A673 (cell line): ENCODE measurements at regions of chr10 and their contacts with region 1.

Region 1: GRCh38 chr10:73644015-73644743 is 2.9 kb upstream of the MYOZ1 start:
- DNase-seq: peak; percentile 81
- H3K4me3 ChIP-seq: no peak overlapping the region
- H3K27ac ChIP-seq: no peak overlapping the region
- H3K4me1 ChIP-seq: peaks cover 6% of the 10 kb centered on the region
- H3K27me3 ChIP-seq: no peaks in the 10 kb centered on the region
- CTCF ChIP-seq: peak; percentile 85

Region 2: GRCh38 chr10:72784551-72785351 is 859.4 kb before region 1 on chr10:
- CTCF ChIA-PET with region 1: no interaction called
- POLR2A ChIA-PET with region 1: no interaction called
- intact Hi-C with region 1: no loop called
- DNase-seq: peak; percentile 68
- H3K4me3 ChIP-seq: peak overlapping the region; percentile 26
- H3K27ac ChIP-seq: peak overlapping the region; percentile 44
- H3K4me1 ChIP-seq: peaks cover 34% of the 10 kb centered on the region
- H3K27me3 ChIP-seq: no peaks in the 10 kb centered on the region
- CTCF ChIP-seq: no peak

Region 3: GRCh38 chr10:73263948-73264347 is 380.2 kb before region 1 on chr10:
- CTCF ChIA-PET with region 1: no interaction called
- POLR2A ChIA-PET with region 1: no interaction called
- intact Hi-C with region 1: loop called (anchors 1 kb)
- DNase-seq: peak; percentile 42
- H3K4me3 ChIP-seq: no peak overlapping the region
- H3K27ac ChIP-seq: no peak overlapping the region
- H3K4me1 ChIP-seq: peaks cover 5% of the 10 kb centered on the region
- H3K27me3 ChIP-seq: no peaks in the 10 kb centered on the region
- CTCF ChIP-seq: peak; percentile 72

Region 4: DNA sequence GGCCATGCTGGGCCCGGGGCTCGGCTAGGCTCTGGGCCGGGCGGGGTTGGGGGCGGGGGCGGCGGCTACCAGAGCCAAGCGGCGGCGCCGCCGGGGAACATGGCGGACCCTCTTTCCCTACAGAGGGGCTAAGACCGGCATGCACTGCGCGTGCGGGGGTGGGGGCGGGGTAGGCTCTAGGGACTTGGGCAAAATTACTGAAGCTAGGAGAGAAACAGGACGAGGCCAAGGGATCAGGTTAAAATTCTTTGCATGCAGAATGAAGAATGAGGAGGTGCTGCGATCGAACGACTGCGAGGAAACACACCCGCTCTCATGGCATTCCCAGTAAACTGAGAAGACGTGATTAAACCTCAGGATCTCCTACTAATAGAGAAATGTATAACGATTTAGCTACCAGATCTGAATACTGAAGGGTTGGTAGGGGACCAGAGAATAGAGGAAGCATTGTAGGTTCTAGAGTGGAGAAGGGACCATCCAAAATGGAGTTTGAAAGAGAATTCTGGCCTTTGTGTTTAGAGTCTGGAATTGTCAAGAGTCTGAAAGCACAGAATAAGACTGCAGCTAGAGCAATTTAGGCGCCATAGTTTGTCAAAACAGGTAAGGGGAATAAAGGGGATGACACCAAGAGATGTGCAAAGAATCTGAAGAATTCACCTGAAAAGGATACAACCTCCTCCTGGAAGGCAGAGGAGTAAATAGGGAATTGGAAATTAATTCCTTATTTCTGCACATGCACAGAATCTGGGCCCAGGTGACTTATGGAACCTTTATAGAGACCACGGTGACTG is 148.1 kb before region 1 on chr10 and contains the start of gene PPP3CB:
- CTCF ChIA-PET with region 1: no interaction called
- POLR2A ChIA-PET with region 1: interaction called, 10 read pairs
- intact Hi-C with region 1: no loop called
- DNase-seq: peak; percentile 98
- H3K4me3 ChIP-seq: peak within 1 kb of the TSS; percentile 96
- H3K27ac ChIP-seq: peak within 1 kb of the TSS; percentile 90
- H3K4me1 ChIP-seq: peaks cover 16% of the 10 kb centered on the region
- H3K27me3 ChIP-seq: no peaks in the 10 kb centered on the region
- CTCF ChIP-seq: no peak
- total RNA-seq, gene PPP3CB: 57.8 and 60.2 TPM in 2 replicates

Region 5: GRCh38 chr10:73529089-73529832 is 114.9 kb before region 1 on chr10:
- CTCF ChIA-PET with region 1: interaction called, 12 read pairs
- POLR2A ChIA-PET with region 1: no interaction called
- intact Hi-C with region 1: loop called (anchors 1 kb)
- DNase-seq: peak; percentile 86
- H3K4me3 ChIP-seq: no peak overlapping the region
- H3K27ac ChIP-seq: no peak overlapping the region
- H3K4me1 ChIP-seq: no peaks in the 10 kb centered on the region
- H3K27me3 ChIP-seq: no peaks in the 10 kb centered on the region
- CTCF ChIP-seq: peak; percentile 85

Region 6: GRCh38 chr10:73545357-73545756 is 98.8 kb before region 1 on chr10:
- CTCF ChIA-PET with region 1: no interaction called
- POLR2A ChIA-PET with region 1: no interaction called
- intact Hi-C with region 1: no loop called
- DNase-seq: no peak
- H3K4me3 ChIP-seq: no peak overlapping the region
- H3K27ac ChIP-seq: no peak overlapping the region
- H3K4me1 ChIP-seq: no peaks in the 10 kb centered on the region
- H3K27me3 ChIP-seq: no peaks in the 10 kb centered on the region
- CTCF ChIP-seq: no peak